ENCODE measurements at regions of chr2 and their contacts with region 1.

Region 1: DNA sequence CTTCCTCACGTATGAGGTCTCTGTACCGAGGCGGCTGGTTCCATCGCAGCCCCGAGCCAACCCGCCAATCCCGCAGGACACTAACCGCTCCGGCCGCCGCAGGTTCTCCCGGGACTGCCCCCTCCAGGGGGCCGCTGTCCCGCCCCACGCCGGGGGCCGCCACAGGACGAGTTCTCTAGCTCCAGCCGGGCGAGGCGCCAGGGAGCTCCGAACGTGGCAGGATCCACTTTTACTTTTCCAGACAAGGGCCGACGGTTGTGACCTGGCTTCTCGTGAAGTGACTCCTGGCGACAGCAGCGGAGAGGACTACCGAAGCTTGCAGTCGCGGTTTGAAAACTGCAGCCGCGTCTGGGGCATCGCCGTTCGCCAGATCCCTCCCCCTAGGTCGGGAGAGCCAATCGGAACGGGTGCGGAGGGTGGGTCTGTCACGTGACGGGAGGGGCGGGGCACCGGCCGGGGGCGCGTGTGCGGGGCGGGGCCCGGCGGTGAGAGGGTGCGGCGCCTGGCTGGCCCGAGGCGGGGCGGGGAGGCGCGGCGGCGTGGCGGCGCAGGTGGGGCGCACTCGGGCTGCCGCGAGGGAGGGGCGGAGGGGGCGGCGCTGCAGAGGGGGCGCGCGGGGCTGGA is at the start of gene STK17B:
- DNase-seq: peak; percentile 98
- H3K4me3 Mint-ChIP-seq: peak within 1 kb of the TSS; percentile 93
- H3K27ac Mint-ChIP-seq: peak within 1 kb of the TSS; percentile 96
- H3K4me1 Mint-ChIP-seq: peaks cover 40% of the 10 kb centered on the region
- H3K27me3 Mint-ChIP-seq: no peaks in the 10 kb centered on the region
- total RNA-seq, gene STK17B: 175 to 176 TPM

Region 2: DNA sequence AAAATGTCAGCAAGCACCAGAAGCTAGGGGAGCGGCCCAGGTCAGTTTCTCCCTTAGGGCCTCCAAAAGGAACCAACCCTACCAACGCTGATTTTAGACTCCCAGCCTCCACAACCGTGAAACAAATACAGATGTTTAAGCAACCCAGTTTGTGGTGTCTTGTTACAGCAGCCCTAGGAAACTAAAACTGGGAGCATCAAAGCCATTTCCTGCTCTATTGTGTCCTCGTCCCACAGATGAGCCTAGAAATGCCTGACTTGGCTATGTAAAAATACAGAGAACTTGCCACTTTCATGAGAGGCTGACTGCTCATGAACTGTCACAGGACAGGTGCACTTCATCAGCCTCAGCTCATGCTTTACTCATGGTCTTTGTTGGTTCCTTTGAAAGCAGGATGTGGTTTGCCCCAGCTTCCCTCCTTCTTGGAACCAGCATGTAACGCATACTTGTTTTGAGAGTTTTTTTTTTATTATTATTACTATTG is 611.9 kb before region 1 on chr2:
- CTCF ChIA-PET with region 1: no interaction called
- POLR2A ChIA-PET with region 1: no interaction called
- intact Hi-C with region 1: loop called (anchors 5 kb)
- DNase-seq: peak; percentile 91
- H3K4me3 Mint-ChIP-seq: peak overlapping the region; percentile 63
- H3K27ac Mint-ChIP-seq: peak overlapping the region; percentile 92
- H3K4me1 Mint-ChIP-seq: peaks cover 61% of the 10 kb centered on the region
- H3K27me3 Mint-ChIP-seq: no peaks in the 10 kb centered on the region

Region 3: GRCh38 chr2:196012314-196012713 is 159.0 kb before region 1 on chr2:
- CTCF ChIA-PET with region 1: no interaction called
- POLR2A ChIA-PET with region 1: no interaction called
- intact Hi-C with region 1: no loop called
- DNase-seq: no peak
- H3K4me3 Mint-ChIP-seq: no peak overlapping the region
- H3K27ac Mint-ChIP-seq: no peak overlapping the region
- H3K4me1 Mint-ChIP-seq: no peaks in the 10 kb centered on the region
- H3K27me3 Mint-ChIP-seq: no peaks in the 10 kb centered on the region

Region 4: DNA sequence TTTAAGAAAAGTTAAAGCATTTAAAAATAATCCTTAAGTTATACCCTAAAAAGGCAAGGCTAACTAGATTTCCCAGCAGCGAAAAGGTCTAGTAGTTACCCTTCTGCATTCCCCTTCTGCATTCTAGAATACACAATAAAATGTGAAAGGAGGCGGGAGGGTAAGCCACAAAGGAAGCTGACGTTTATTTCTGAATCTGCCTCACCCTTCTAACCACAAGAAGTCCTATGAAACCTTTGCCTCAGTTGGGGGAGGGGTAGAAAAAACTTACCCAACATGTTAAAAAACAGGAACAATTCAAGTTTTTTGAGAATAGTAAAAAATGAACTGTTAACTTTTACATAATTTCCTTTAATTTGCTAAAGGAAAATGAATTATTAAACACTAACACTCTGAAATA is 11.3 kb before region 1 on chr2:
- CTCF ChIA-PET with region 1: interaction called, 7 read pairs
- POLR2A ChIA-PET with region 1: interaction called, 67 read pairs
- intact Hi-C with region 1: loop called (anchors 1 kb)
- DNase-seq: peak; percentile 76
- H3K4me3 Mint-ChIP-seq: peak overlapping the region; percentile 39
- H3K27ac Mint-ChIP-seq: peak overlapping the region; percentile 96
- H3K4me1 Mint-ChIP-seq: peaks cover 77% of the 10 kb centered on the region
- H3K27me3 Mint-ChIP-seq: no peaks in the 10 kb centered on the region

Region 5: DNA sequence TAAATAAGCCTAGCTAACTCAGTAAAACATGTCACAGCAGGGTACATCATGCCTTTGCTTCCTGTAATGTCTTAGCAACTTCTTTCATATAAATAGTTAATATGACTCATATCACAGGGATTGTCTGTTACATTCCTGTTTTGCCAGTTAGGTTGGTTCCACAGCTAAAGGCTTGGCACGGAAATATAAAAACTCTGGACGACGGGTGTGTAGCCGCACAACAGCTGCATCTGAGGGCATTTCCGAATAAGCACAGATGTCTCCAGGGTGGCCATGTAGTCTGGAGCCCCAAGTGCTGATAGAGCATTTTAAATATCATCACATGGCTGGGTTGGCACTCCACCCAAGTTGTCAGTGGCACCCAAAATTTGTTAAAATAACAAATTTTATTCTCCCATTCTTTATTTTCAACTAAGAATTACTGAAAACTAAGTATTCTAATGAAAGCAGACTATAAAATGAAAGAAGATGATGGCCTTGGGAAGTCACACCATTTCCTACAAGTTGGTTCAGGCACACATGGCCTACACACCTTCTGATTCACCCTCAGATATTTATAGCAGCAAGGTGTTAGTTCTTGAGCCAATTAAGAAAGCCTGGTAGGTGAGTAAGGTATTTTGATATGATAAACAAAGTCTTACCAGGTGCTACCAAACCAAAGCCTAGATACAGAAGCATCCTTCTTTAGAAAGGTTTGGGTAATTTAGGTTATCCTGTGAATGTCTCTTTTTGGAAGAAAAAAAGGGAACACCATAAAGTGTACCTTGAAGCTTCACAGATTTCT is 61.9 kb after region 1 on chr2:
- CTCF ChIA-PET with region 1: no interaction called
- POLR2A ChIA-PET with region 1: interaction called, 17 read pairs
- intact Hi-C with region 1: no loop called
- DNase-seq: no peak
- H3K4me3 Mint-ChIP-seq: peak overlapping the region; percentile 7
- H3K27ac Mint-ChIP-seq: peak overlapping the region; percentile 93
- H3K4me1 Mint-ChIP-seq: peaks cover 89% of the 10 kb centered on the region
- H3K27me3 Mint-ChIP-seq: no peaks in the 10 kb centered on the region

Region 6: GRCh38 chr2:196277002-196277401 is 105.6 kb after region 1 on chr2:
- CTCF ChIA-PET with region 1: interaction called, 50 read pairs
- POLR2A ChIA-PET with region 1: interaction called, 13 read pairs
- intact Hi-C with region 1: loop called (anchors 2 kb)
- DNase-seq: peak; percentile 42
- H3K4me3 Mint-ChIP-seq: no peak overlapping the region
- H3K27ac Mint-ChIP-seq: peak overlapping the region; percentile 69
- H3K4me1 Mint-ChIP-seq: peaks cover 57% of the 10 kb centered on the region
- H3K27me3 Mint-ChIP-seq: no peaks in the 10 kb centered on the region

Region 7: GRCh38 chr2:197453161-197453914 is 1282.0 kb after region 1 on chr2 and contains the start of gene COQ10B:
- CTCF ChIA-PET with region 1: no interaction called
- POLR2A ChIA-PET with region 1: no interaction called
- intact Hi-C with region 1: loop called (anchors 10 kb)
- DNase-seq: peak; percentile 100
- H3K4me3 Mint-ChIP-seq: peak within 1 kb of the TSS; percentile 99
- H3K27ac Mint-ChIP-seq: peak within 1 kb of the TSS; percentile 100
- H3K4me1 Mint-ChIP-seq: peaks cover 39% of the 10 kb centered on the region
- H3K27me3 Mint-ChIP-seq: no peaks in the 10 kb centered on the region
- total RNA-seq, gene COQ10B: 21.5 TPM